Activated T-helper 1 cell treated with anti-CD3 and anti-CD28 coated beads, Interleukin-12 subunit alpha, Interleukin-12 subunit beta, Interleukin-2, Interleukin-4 antibody, amounts not matched to agents 30 ng/mL and 10 ng/mL and 1 ng/mL, durations not matched to agents 14 hours and 24 hours and 36 hours (primary cell): ENCODE measurements at regions of chr16 and their contacts with region 1.

Region 1: GRCh38 chr16:74709441-74709877 is 8.8 kb upstream of the MLKL start:
- DNase-seq: peak; percentile 67
- H3K4me3 Mint-ChIP-seq: no peak overlapping the region
- H3K27ac Mint-ChIP-seq: no peak overlapping the region
- H3K4me1 Mint-ChIP-seq: peaks cover 7% of the 10 kb centered on the region
- H3K27me3 Mint-ChIP-seq: no peaks in the 10 kb centered on the region

Region 2: GRCh38 chr16:74695450-74696422 is 13.7 kb before region 1 on chr16:
- intact Hi-C with region 1: loop called (anchors 1 kb)
- DNase-seq: peak; percentile 66
- H3K4me3 Mint-ChIP-seq: peak overlapping the region; percentile 84
- H3K27ac Mint-ChIP-seq: peak overlapping the region; percentile 70
- H3K4me1 Mint-ChIP-seq: peaks cover 50% of the 10 kb centered on the region
- H3K27me3 Mint-ChIP-seq: no peaks in the 10 kb centered on the region

Region 3: DNA sequence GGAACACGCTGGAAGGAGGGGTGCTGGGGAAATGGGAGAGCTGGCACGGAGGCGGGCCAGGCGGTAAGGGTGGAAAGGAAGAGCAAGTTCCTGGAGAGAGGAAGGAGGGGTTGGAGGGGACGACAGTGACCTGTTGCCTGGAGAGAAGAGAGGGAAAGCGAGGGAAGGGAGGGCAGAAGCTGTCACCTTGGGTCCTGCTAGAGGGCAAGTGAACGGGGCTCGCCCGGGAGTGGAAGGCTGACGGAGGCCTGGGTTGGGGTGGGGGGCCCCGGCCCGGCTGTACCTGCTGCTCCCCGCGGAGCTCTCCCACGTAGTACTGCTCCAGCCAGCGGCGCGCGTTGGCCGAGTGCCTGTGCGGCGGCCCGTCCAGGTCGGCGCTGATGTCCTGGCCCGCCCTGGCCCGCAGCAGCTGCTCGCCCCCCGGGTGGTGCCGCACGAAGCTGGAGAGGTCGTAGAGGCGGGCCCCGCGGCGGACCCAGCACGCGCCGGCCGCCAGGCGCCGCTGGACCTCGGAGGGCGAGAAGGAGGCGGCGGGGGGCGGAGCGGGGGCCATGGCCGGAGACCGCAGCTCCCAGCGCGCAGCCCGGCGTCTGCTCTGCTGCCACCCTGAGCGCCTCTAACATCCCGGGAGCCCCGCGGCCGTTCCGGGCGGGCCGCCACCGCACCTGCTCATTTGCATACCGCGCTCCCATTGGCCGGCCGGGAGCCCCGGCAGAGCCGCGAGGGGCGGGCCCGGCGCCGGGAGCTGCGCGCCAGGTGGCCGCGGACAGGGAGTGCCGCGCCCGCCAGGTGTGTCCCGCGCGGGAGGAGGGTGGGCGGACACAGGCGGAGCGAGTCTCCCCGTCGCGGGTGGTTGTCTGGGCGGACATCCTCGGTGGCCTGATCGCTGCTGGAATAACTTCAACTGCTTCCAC is 65.0 kb after region 1 on chr16 and contains the start of gene FA2H:
- intact Hi-C with region 1: loop called (anchors 5 kb)
- DNase-seq: peak; percentile 69
- H3K4me3 Mint-ChIP-seq: peak within 1 kb of the TSS; percentile 74
- H3K27ac Mint-ChIP-seq: no peak within 1 kb of the TSS
- H3K4me1 Mint-ChIP-seq: peaks cover 17% of the 10 kb centered on the region
- H3K27me3 Mint-ChIP-seq: peaks cover 43% of the 10 kb centered on the region
- total RNA-seq, gene FA2H: not detected in 2 replicates

Region 4: DNA sequence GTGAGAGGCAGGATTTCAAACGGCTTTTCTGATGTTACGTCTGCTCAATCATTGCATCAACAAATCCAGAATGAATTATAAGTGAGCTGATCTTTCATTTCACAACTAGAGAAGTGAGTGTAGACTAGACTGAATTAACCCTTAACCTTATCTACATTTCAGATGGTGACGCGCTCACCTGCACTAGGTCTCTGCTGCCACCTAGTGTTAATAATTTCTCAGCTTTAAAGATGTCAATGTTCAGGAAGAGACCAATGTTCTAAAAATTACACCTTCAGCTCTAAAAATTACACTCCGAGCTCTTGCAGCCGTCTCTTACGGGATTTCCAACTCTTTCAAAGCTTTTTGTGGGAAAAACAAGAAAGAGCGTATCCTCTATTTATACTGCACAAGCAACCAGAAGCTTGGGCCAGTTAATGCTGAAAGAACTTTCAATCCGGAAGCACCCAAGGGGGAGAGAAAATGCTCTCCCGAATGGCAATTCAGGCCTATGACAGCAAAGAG is 153.3 kb after region 1 on chr16:
- intact Hi-C with region 1: loop called (anchors 1 kb)
- DNase-seq: no peak
- H3K4me3 Mint-ChIP-seq: no peak overlapping the region
- H3K27ac Mint-ChIP-seq: no peak overlapping the region
- H3K4me1 Mint-ChIP-seq: peaks cover 4% of the 10 kb centered on the region
- H3K27me3 Mint-ChIP-seq: no peaks in the 10 kb centered on the region

Region 5: DNA sequence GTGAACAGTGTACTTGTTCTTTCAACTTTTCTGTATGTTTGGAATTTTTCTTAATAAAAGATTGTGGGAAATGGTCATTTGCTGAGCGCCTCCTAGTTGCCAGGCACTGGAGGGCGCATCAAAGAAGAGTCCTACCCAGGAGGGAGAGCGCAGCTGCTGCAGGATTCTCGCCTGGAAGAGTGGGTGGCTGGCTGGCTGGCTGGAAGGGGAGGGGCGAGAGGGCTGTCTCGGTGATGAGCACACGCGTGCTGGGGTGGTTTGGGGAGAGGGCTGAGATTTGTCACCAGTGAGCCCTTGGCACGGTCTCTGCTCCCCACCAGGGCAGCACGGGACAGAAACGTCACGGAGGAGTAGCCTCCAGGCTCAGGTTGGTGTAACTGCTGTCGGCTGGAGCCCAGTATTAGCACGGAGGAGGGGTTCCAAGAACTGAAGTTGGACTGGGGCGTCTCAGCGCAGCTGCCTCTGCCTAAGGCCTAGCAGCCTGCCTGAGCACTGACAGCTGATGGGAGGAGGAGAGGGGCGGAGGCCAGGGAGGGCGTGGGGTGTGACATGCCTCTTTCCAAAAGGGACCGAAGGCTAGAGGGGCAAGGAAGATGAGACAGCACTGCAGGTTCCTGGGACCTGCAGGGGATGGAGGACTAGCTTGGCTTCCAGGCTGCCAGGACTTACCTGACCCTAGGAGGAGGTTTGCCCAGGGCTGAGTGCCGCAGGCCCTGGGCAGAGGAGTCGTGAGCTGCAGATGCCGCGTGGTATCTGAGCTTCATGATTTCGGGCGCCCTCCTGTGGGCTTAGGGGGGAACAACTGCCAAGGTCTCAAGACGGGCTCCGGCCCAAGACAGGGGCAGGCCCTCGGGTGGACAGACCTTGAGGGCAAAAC is 401.4 kb after region 1 on chr16:
- intact Hi-C with region 1: loop called (anchors 1 kb)
- DNase-seq: peak; percentile 77
- H3K4me3 Mint-ChIP-seq: peak overlapping the region; percentile 79
- H3K27ac Mint-ChIP-seq: peak overlapping the region; percentile 92
- H3K4me1 Mint-ChIP-seq: peaks cover 62% of the 10 kb centered on the region
- H3K27me3 Mint-ChIP-seq: no peaks in the 10 kb centered on the region

Region 6: GRCh38 chr16:75385507-75386152 is 676.2 kb after region 1 on chr16:
- intact Hi-C with region 1: loop called (anchors 10 kb)
- DNase-seq: no peak
- H3K4me3 Mint-ChIP-seq: no peak overlapping the region
- H3K27ac Mint-ChIP-seq: no peak overlapping the region
- H3K4me1 Mint-ChIP-seq: peaks cover 4% of the 10 kb centered on the region
- H3K27me3 Mint-ChIP-seq: peaks cover 14% of the 10 kb centered on the region